Aorta (tissue), 5 donors: ENCODE measurements at regions of chr20 and their contacts with region 1.

Region 1: DNA sequence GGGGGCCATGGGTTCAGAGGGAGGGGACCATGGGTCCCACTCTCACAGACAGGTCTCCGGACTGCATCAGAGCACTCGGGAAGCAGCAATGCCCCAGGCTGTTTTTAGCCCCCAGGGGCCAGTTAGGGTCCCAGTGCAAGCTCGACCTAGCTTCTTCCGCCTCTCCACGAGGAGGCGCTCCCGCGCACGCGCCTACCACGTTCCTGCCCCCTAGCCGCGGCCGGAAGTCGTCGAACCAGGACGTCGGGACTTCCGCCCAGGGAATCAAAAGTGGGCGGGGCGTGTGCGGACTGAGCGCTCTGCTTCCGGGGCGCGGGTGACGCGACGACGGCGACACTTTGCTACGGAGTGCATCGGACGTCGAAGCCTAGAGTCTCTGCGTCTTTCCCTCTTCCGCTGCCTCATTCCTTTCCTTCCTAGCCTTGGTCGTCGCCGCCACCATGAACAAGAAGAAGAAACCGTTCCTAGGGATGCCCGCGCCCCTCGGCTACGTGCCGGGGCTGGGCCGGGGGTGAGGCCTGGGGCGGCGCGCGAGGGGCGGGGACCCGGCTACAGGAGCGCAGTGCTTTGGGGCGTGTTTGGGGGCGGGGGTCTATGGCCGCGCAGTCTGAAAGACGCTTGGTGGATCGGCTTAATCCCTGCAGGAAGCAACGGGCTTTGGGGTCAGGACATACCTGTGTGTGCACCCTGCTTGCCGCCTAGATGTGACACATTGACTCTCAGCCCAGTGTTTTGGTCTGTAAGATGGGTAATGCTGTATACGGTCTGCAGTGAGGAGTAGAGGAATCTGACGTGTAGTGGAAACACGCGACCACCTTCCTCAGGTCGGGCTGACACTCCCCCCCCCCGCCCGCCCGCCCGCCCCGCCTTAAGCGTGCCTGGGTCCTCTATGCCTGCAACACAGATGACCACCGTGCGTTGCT is at the start of gene PRPF6:
- DNase-seq: peak; percentile 97 to 99
- ATAC-seq: peak; percentile 96
- H3K4me3 ChIP-seq: peak within 1 kb of the TSS; percentile 75 to 97
- H3K27ac ChIP-seq: peak within 1 kb of the TSS in 1 of 2 donors; percentile 41
- H3K4me1 ChIP-seq: no peaks in the 10 kb centered on the region
- H3K27me3 ChIP-seq: no peaks in the 10 kb centered on the region
- total RNA-seq, gene PRPF6: 50.3 to 59.1 TPM

Region 2: GRCh38 chr20:64062596-64063388 is 81.7 kb after region 1 on chr20 and contains the start of gene TCEA2:
- intact Hi-C with region 1: loop called in 1 of 2 experiments (anchors 2 kb)
- DNase-seq: peak; percentile 99
- ATAC-seq: peak; percentile 96
- H3K4me3 ChIP-seq: peak within 1 kb of the TSS; percentile 74 to 79
- H3K27ac ChIP-seq: peak within 1 kb of the TSS; percentile 31 to 35
- H3K4me1 ChIP-seq: no peaks in the 10 kb centered on the region
- H3K27me3 ChIP-seq: no peaks in the 10 kb centered on the region
- total RNA-seq, gene TCEA2: 45.5 to 71.1 TPM